CD4-positive, alpha-beta memory T cell (primary cell): ENCODE measurements at regions of chr3 and their contacts with region 1.

Region 1: DNA sequence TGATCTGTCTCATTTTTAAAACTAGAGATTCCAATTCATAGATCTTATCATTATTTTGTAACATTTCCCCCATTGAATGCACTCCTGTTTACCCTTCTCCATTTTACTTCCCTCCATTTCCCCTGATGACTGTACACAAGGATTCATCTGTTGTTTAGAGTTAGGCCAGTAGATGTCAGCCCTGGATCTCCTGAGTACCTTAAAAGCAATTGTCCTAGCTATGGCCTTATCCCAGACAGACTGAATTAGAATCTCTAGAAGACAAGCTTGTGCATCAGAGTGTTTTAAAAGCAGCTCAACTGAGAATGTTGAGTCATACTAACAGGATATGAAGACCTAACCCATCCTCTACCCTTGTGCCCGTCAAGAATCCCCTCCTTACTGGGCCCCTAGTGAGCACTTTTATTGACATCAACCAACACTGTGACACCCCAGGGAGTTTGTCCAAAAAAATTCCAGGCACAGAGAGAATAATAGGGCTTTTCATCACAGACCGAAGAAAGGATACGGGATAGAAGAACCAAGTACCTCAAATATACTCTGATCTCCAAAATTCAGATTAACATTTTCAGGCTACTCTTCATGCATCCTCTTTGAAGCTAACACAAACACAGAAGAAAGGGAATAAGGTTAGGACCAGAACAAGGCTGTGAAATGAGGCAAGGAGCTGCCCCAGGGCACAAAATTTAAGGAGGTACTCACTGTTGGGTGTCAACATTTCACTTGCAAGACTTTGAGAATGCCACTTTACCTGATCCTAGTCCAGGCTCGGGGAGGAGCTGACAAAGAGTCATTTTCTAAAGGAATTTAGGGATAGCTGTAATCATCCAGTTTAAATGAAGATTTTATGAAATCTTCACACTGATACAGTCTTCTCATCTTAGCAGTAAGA is 17.1 kb downstream of the ZBED2 start:
- DNase-seq: peak in 4 of 5 donors; percentile 10 to 28 (median 20)
- H3K4me3 ChIP-seq: no peak overlapping the region
- H3K4me3 Mint-ChIP-seq: peak overlapping the region in 1 of 8 donors; percentile 6
- H3K27ac ChIP-seq: no peak overlapping the region
- H3K27ac Mint-ChIP-seq: peak overlapping the region in 6 of 7 donors; percentile 0 to 73 (median 46)
- H3K4me1 ChIP-seq: peaks cover 10% of the 10 kb centered on the region
- H3K4me1 Mint-ChIP-seq: peaks cover 31 to 60% (median 45%) of the 10 kb centered on the region in 4 donors
- H3K27me3 ChIP-seq: no peaks in the 10 kb centered on the region
- H3K27me3 Mint-ChIP-seq: no peaks in the 10 kb centered on the region

Region 2: DNA sequence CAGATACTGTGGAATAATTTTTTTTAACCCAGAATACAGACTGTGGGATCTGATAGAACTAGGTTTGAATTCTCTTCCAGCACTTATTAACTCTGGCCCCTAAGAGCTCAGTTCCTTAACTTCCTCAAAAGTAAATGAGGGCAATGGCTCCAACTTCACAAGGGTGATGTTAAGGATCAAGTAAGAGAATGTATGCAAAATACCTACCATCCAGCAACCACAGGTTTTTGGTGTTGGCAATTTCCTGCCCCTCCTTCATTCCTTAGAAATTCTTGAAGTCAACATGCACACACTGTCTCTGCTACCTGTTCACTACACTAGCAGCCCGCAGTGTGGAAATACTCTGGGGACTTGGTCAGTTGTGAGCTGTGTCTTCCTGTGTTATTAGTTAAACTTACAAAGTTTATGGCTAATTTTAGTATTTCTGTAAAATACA is 12.1 kb after region 1 on chr3:
- CTCF ChIA-PET with region 1: interaction called, 20 read pairs
- POLR2A ChIA-PET with region 1: no interaction called
- intact Hi-C with region 1: no loop called
- DNase-seq: no peak
- H3K4me3 ChIP-seq: no peak overlapping the region
- H3K4me3 Mint-ChIP-seq: no peak overlapping the region
- H3K27ac ChIP-seq: no peak overlapping the region
- H3K27ac Mint-ChIP-seq: peak overlapping the region in 4 of 7 donors; percentile 29 to 63 (median 40)
- H3K4me1 ChIP-seq: peaks cover 29% of the 10 kb centered on the region
- H3K4me1 Mint-ChIP-seq: peaks cover 26 to 54% (median 43%) of the 10 kb centered on the region in 4 donors
- H3K27me3 ChIP-seq: no peaks in the 10 kb centered on the region
- H3K27me3 Mint-ChIP-seq: no peaks in the 10 kb centered on the region

Region 3: GRCh38 chr3:111691293-111691909 is 113.4 kb after region 1 on chr3:
- CTCF ChIA-PET with region 1: interaction called, 19 read pairs
- POLR2A ChIA-PET with region 1: interaction called, 3 read pairs
- intact Hi-C with region 1: loop called (anchors 2 kb)
- DNase-seq: peak in 2 of 5 donors; percentile 27 to 30
- H3K4me3 ChIP-seq: no peak overlapping the region
- H3K4me3 Mint-ChIP-seq: no peak overlapping the region
- H3K27ac ChIP-seq: no peak overlapping the region
- H3K27ac Mint-ChIP-seq: peak overlapping the region in 2 of 7 donors; percentile 23 to 45
- H3K4me1 ChIP-seq: peaks cover 19% of the 10 kb centered on the region
- H3K4me1 Mint-ChIP-seq: peaks cover 32 to 51% (median 39%) of the 10 kb centered on the region in 4 donors
- H3K27me3 ChIP-seq: no peaks in the 10 kb centered on the region
- H3K27me3 Mint-ChIP-seq: no peaks in the 10 kb centered on the region

Region 4: GRCh38 chr3:111769110-111769991 is 191.3 kb after region 1 on chr3:
- CTCF ChIA-PET with region 1: no interaction called
- POLR2A ChIA-PET with region 1: no interaction called
- intact Hi-C with region 1: no loop called
- DNase-seq: no peak
- H3K4me3 ChIP-seq: no peak overlapping the region
- H3K4me3 Mint-ChIP-seq: no peak overlapping the region
- H3K27ac ChIP-seq: no peak overlapping the region
- H3K27ac Mint-ChIP-seq: no peak overlapping the region
- H3K4me1 ChIP-seq: no peaks in the 10 kb centered on the region
- H3K4me1 Mint-ChIP-seq: no peaks in the 10 kb centered on the region
- H3K27me3 ChIP-seq: no peaks in the 10 kb centered on the region
- H3K27me3 Mint-ChIP-seq: peaks cover 0 to 2% of the 10 kb centered on the region in 2 donors